A673 (cell line): ENCODE measurements at regions of chr6 and their contacts with region 1.

Region 1: GRCh38 chr6:21935561-21936028 is 342.0 kb downstream of the SOX4 start:
- DNase-seq: peak; percentile 64
- H3K4me3 ChIP-seq: no peak overlapping the region
- H3K27ac ChIP-seq: no peak overlapping the region
- H3K4me1 ChIP-seq: no peaks in the 10 kb centered on the region
- H3K27me3 ChIP-seq: no peaks in the 10 kb centered on the region
- CTCF ChIP-seq: peak; percentile 73

Region 2: DNA sequence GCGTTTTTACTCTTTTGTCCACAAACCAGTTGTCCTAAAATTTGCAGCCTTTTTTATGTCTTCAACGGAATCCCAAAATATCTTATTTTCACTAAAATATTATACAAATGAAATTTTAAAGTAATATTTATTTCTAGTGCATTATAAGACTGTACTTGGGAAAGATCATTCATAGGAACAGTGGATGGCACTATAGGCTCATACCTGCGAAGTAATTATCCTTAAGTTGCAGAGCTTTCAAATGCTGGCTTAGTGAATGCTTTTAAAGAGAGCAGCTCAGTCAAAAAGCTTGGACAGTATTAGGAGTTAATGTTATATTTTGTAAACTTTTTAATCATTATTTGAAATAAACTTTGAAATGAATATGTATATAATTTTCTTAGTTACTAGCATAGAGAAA is 1146.4 kb before region 1 on chr6:
- CTCF ChIA-PET with region 1: interaction called, 12 read pairs
- POLR2A ChIA-PET with region 1: no interaction called
- intact Hi-C with region 1: no loop called
- DNase-seq: no peak
- H3K4me3 ChIP-seq: no peak overlapping the region
- H3K27ac ChIP-seq: no peak overlapping the region
- H3K4me1 ChIP-seq: peaks cover 20% of the 10 kb centered on the region
- H3K27me3 ChIP-seq: no peaks in the 10 kb centered on the region
- CTCF ChIP-seq: no peak

Region 3: GRCh38 chr6:21748343-21749056 is 187.1 kb before region 1 on chr6:
- CTCF ChIA-PET with region 1: no interaction called
- POLR2A ChIA-PET with region 1: no interaction called
- intact Hi-C with region 1: loop called (anchors 10 kb)
- DNase-seq: peak; percentile 86
- H3K4me3 ChIP-seq: no peak overlapping the region
- H3K27ac ChIP-seq: no peak overlapping the region
- H3K4me1 ChIP-seq: peaks cover 43% of the 10 kb centered on the region
- H3K27me3 ChIP-seq: no peaks in the 10 kb centered on the region
- CTCF ChIP-seq: no peak

Region 4: DNA sequence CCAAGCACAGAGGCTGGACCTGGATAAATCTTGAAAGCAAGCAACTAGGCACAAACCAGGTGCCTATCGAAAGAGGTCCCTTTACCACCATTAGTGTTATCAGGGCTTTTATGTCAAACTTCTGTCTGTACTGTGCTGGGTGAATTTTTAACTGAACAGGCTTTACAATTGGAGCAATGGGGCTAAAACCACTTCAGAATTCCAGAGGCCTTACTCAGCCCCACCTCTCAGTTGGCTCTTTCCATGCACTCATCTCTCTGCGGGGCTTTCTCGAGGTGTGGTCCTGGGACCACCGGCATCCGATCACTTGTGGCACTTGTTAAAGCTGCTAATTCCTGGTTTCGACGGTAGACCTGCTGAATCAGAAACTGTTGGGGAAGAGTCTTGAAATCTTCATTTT is 109.6 kb before region 1 on chr6:
- CTCF ChIA-PET with region 1: no interaction called
- POLR2A ChIA-PET with region 1: no interaction called
- intact Hi-C with region 1: loop called (anchors 10 kb)
- DNase-seq: no peak
- H3K4me3 ChIP-seq: no peak overlapping the region
- H3K27ac ChIP-seq: no peak overlapping the region
- H3K4me1 ChIP-seq: peaks cover 15% of the 10 kb centered on the region
- H3K27me3 ChIP-seq: peaks cover 50% of the 10 kb centered on the region
- CTCF ChIP-seq: no peak

Region 5: DNA sequence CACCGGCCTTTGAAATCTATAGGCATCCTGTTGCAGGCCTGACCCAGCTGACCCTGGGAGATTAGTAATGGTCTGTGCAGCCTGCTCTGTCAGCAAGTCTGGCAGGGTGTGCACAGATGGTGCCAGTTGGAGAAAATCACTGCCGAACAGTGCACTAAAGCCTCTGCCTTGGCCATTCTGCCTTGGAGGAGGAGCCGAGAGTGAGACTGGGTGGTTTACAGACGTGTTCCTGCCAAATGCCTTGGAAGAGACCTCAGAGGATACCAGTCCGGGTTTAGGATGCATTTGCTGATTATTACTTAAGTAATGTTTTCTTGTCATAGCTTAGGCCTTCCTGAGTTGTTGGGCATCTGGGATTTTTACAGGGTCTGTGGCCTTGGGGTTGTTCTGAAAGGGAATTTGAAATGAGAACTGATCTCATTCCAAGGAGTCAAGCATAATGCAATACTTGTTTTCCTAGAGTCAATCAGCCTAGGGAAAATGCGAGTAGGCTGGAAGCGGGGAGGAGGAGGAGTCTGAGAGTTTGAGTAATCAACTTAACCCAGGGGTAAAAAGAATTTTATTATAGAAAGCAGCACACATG is 50.0 kb before region 1 on chr6:
- CTCF ChIA-PET with region 1: no interaction called
- POLR2A ChIA-PET with region 1: no interaction called
- intact Hi-C with region 1: no loop called
- DNase-seq: no peak
- H3K4me3 ChIP-seq: no peak overlapping the region
- H3K27ac ChIP-seq: no peak overlapping the region
- H3K4me1 ChIP-seq: no peaks in the 10 kb centered on the region
- H3K27me3 ChIP-seq: no peaks in the 10 kb centered on the region
- CTCF ChIP-seq: no peak